Activated naive CD4-positive, alpha-beta T cell treated with anti-CD3 and anti-CD28 coated beads, Interleukin-2, amount 10 ng/mL, durations not matched to agents 7 days and 5 days (primary cell): ENCODE measurements at regions of chr14 and their contacts with region 1.

Region 1: DNA sequence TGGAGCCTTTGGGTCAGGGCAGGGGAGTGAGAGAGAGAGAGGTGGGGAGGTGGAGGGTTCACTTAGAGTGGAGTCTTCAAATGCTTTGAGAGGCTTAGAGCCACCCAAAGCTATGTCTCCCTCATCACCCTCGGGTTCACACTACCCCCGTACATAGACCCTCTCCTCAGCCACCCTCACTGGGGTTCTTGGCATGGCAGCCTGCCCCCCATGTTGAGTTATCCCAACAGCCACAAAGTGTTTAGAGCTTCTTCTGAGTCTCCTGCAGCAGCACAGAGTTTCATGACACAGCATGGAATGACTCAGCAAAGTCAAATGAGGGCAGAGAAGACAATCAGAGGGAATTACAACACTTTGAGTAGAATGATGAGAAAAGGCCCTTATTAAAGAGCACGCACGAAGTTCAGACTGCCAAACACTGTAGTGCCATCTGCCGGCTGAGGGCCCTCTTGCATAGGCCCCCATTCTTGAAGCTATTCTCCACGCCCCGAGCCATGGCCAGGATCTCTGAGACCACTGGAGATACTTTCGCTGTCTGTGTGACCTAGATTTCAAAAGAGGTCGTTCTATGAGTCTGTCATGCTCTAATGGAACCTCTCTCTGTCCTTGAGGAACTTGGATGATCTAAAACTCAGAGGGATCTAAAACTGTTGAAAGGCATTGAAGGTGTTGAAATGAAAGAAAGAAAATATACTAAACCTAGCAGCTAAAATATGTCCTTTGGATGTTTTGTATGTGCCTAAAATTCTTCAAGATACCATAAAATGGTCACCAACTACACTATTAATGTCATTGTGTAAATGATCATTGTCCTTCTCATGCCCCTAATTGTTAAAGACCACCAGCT is 221.9 kb downstream of the PELI2 start:
- DNase-seq: peak; percentile 74
- H3K4me3 Mint-ChIP-seq: no peak overlapping the region
- H3K27ac Mint-ChIP-seq: peak overlapping the region; percentile 78
- H3K4me1 Mint-ChIP-seq: peaks cover 8% of the 10 kb centered on the region
- H3K27me3 Mint-ChIP-seq: no peaks in the 10 kb centered on the region

Region 2: DNA sequence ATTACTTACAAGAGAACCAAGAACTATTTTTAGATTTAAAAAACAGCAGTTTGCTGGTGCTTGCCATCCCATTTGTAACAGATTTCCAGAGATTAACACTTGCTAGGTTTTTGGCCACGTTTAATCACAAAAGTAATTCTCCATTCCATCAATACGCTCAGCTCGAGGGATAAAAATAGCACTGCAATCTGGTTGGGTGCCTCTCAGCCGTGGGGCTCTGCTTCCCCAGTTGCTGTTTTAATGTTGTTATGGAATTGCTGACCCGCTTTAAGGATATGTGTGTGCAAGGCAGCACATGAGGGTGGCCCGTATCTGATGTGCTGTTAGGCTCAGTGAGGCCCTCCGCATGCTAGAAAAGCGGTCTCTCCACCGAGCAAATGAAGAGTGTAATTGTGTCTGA is 17.4 kb after region 1 on chr14:
- CTCF ChIA-PET with region 1: interaction called, 11 read pairs
- DNase-seq: no peak
- H3K4me3 Mint-ChIP-seq: no peak overlapping the region
- H3K27ac Mint-ChIP-seq: no peak overlapping the region
- H3K4me1 Mint-ChIP-seq: peaks cover 9% of the 10 kb centered on the region
- H3K27me3 Mint-ChIP-seq: no peaks in the 10 kb centered on the region